GM12878 (cell line): ENCODE measurements at regions of chr3 and their contacts with region 1.

Region 1: DNA sequence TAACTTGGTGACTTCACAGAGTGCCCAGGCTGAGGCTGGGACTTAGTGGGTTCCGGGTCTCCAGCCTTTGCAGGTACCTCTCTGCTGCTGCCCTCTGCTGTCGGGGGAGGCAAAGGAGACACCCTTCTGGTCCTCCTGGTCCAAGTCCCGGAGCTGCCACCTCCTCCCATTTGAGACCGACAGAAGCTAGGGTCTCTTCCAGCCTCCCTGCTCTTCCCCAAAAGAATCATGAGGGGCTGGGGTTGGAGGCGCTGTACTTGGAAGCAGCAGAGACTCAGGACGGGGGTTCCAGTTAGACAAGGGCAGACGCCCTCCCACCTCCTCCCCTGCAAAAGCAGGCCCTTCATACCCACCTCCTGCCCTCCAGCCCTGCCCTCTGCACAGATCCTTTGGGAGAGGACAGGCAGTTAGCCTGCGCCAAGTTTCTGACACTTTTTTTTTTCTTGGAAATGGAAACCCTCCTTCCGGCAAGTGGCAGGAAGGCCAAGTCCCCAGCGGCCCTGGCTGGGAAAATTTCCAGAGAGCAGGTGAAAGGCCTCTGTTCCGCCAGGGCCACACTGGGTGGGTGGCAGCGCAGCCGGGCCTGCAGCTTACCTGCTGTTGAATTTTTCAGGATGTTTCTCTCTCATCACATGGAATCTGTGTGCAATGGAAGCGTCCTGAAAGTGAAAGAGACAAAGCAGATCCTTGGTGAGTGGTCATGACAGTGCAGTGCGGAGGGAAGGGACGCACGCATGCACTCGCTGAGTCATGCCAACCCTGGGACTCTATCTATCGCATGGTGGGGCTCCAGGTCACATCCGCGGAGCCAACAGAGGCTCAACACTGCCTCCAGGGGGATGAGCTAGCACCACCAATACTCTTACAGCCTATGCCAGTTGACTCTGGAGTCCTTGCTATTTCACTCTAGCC is 119.9 kb downstream of the DGKG start:
- DNase-seq: no peak
- ATAC-seq: peak; percentile 96
- H3K4me3 ChIP-seq: peak overlapping the region; percentile 64
- H3K27ac ChIP-seq: peak overlapping the region; percentile 54
- H3K4me1 ChIP-seq: peaks cover 29% of the 10 kb centered on the region
- H3K27me3 ChIP-seq: no peaks in the 10 kb centered on the region
- CTCF ChIP-seq: peak; percentile 75 to 79 (median 75)
- EP300 ChIP-seq: no peak
- POLR2A ChIP-seq: peak; percentile 42; the same call in 1 of the 2 replicates
- RAD21 ChIP-seq: peak; percentile 89

Region 2: DNA sequence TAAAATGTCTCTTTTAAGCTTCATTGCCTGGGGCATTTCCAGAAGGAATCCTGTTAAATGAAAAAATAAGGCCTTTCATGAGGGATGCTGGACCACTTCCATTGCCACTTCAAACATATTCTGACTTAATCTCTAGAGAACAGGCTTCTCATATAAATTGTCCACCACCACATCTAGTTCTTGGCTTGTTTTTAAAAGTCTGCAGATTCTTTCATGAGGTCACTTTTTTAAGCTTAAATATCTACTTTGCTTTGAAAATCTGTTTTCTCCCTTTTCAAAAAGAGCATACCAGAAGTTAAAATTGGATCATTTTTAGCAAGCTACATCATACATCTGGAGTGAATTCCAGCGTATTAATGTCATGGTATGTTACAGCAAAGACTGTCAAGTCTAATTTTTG is 1220.9 kb before region 1 on chr3:
- CTCF ChIA-PET with region 1: no interaction called
- POLR2A ChIA-PET with region 1: no interaction called
- RAD21 ChIA-PET with region 1: no interaction called
- SMC1A ChIA-PET with region 1: no interaction called
- in situ Hi-C with region 1: no loop called
- intact Hi-C with region 1: no loop called
- DNase-seq: no peak
- ATAC-seq: no peak
- H3K4me3 ChIP-seq: no peak overlapping the region
- H3K27ac ChIP-seq: no peak overlapping the region
- H3K4me1 ChIP-seq: no peaks in the 10 kb centered on the region
- H3K27me3 ChIP-seq: no peaks in the 10 kb centered on the region
- CTCF ChIP-seq: no peak
- EP300 ChIP-seq: no peak
- POLR2A ChIP-seq: no peak
- RAD21 ChIP-seq: no peak

Region 3: GRCh38 chr3:185976977-185977678 is 265.0 kb before region 1 on chr3:
- CTCF ChIA-PET with region 1: interaction called, 87 read pairs
- POLR2A ChIA-PET with region 1: no interaction called
- RAD21 ChIA-PET with region 1: interaction called, 38 read pairs
- SMC1A ChIA-PET with region 1: interaction called, 12 read pairs
- in situ Hi-C with region 1: loop called (anchors 5 kb)
- intact Hi-C with region 1: no loop called
- DNase-seq: peak; percentile 42
- ATAC-seq: peak; percentile 100
- H3K4me3 ChIP-seq: no peak overlapping the region
- H3K27ac ChIP-seq: no peak overlapping the region
- H3K4me1 ChIP-seq: peaks cover 4% of the 10 kb centered on the region; the same call in 1 of the 2 replicates
- H3K27me3 ChIP-seq: no peaks in the 10 kb centered on the region
- CTCF ChIP-seq: peak; percentile 85 to 93 (median 90)
- EP300 ChIP-seq: no peak
- POLR2A ChIP-seq: no peak
- RAD21 ChIP-seq: peak; percentile 76

Region 4: DNA sequence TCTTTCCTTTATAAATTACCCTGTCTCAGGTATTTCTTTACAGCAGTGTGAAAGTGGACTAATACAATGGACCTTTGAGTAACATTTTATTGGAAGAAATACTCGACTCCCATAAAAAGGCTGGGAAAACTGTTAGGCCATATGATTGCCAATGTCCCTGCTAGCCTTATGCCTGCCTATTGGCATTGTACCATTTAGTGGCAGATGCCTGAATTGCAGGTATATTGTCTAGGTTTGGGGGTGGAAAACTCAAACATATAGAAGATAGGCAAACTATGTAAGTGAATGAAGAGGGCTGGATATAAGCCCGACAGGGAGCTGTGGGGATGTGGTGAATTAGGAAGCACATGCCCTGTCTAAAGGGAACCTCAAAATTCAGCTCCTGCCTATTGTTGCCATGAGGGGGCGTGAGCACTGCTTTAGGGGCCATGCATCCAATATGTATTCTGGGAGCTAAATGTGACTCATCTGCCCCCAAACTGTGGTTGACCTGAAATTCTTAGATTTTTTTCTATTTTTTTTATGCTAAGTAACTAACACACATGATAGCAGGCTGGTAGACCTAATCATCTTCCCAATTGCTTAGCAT is 239.2 kb before region 1 on chr3:
- CTCF ChIA-PET with region 1: interaction called, 13 read pairs
- POLR2A ChIA-PET with region 1: interaction called, 4 read pairs
- RAD21 ChIA-PET with region 1: interaction called, 12 read pairs
- SMC1A ChIA-PET with region 1: interaction called, 11 read pairs
- in situ Hi-C with region 1: no loop called
- intact Hi-C with region 1: no loop called
- DNase-seq: no peak
- ATAC-seq: peak; percentile 75
- H3K4me3 ChIP-seq: no peak overlapping the region
- H3K27ac ChIP-seq: no peak overlapping the region
- H3K4me1 ChIP-seq: peaks cover 6% of the 10 kb centered on the region
- H3K27me3 ChIP-seq: no peaks in the 10 kb centered on the region
- CTCF ChIP-seq: peak in 2 of 3 experiments; percentile 33 to 34; a peak in 4 of 6 replicates
- EP300 ChIP-seq: no peak
- POLR2A ChIP-seq: no peak
- RAD21 ChIP-seq: peak; percentile 48

Region 5: GRCh38 chr3:186152889-186153292 is 89.3 kb before region 1 on chr3:
- CTCF ChIA-PET with region 1: interaction called, 7 read pairs
- POLR2A ChIA-PET with region 1: interaction called, 3 read pairs
- RAD21 ChIA-PET with region 1: interaction called, 3 read pairs
- SMC1A ChIA-PET with region 1: interaction called, 12 read pairs
- in situ Hi-C with region 1: no loop called
- intact Hi-C with region 1: loop called (anchors 5 kb)
- DNase-seq: peak; percentile 60
- ATAC-seq: peak; percentile 95
- H3K4me3 ChIP-seq: peak overlapping the region; percentile 34; the same call in 1 of the 2 replicates
- H3K27ac ChIP-seq: peak overlapping the region; percentile 68
- H3K4me1 ChIP-seq: peaks cover 28% of the 10 kb centered on the region
- H3K27me3 ChIP-seq: no peaks in the 10 kb centered on the region
- CTCF ChIP-seq: no peak
- EP300 ChIP-seq: peak; percentile 56 to 68; a peak in 2 of 4 replicates
- POLR2A ChIP-seq: no peak
- RAD21 ChIP-seq: peak; percentile 2; the same call in 1 of the 2 replicates

Region 6: GRCh38 chr3:186217820-186218164 is 24.4 kb before region 1 on chr3:
- CTCF ChIA-PET with region 1: interaction called, 15 read pairs
- POLR2A ChIA-PET with region 1: no interaction called
- RAD21 ChIA-PET with region 1: interaction called, 6 read pairs
- SMC1A ChIA-PET with region 1: interaction called, 23 read pairs
- in situ Hi-C with region 1: no loop called
- intact Hi-C with region 1: no loop called
- DNase-seq: peak; percentile 63
- ATAC-seq: peak; percentile 97
- H3K4me3 ChIP-seq: no peak overlapping the region
- H3K27ac ChIP-seq: peak overlapping the region; percentile 57
- H3K4me1 ChIP-seq: peaks cover 26% of the 10 kb centered on the region
- H3K27me3 ChIP-seq: no peaks in the 10 kb centered on the region; a peak in 1 of 4 replicates
- CTCF ChIP-seq: no peak
- EP300 ChIP-seq: peak; percentile 52 to 67; a peak in 3 of 4 replicates
- POLR2A ChIP-seq: no peak
- RAD21 ChIP-seq: no peak

Region 7: GRCh38 chr3:186315581-186316354 is 73.6 kb after region 1 on chr3:
- CTCF ChIA-PET with region 1: no interaction called
- POLR2A ChIA-PET with region 1: no interaction called
- RAD21 ChIA-PET with region 1: no interaction called
- SMC1A ChIA-PET with region 1: no interaction called
- in situ Hi-C with region 1: no loop called
- intact Hi-C with region 1: no loop called
- DNase-seq: no peak
- ATAC-seq: no peak
- H3K4me3 ChIP-seq: no peak overlapping the region
- H3K27ac ChIP-seq: no peak overlapping the region
- H3K4me1 ChIP-seq: no peaks in the 10 kb centered on the region
- H3K27me3 ChIP-seq: no peaks in the 10 kb centered on the region
- CTCF ChIP-seq: no peak
- EP300 ChIP-seq: no peak
- POLR2A ChIP-seq: no peak
- RAD21 ChIP-seq: no peak